Esophagus muscularis mucosa (tissue), 4 donors: ENCODE measurements at regions of chrX and their contacts with region 1.

Region 1: DNA sequence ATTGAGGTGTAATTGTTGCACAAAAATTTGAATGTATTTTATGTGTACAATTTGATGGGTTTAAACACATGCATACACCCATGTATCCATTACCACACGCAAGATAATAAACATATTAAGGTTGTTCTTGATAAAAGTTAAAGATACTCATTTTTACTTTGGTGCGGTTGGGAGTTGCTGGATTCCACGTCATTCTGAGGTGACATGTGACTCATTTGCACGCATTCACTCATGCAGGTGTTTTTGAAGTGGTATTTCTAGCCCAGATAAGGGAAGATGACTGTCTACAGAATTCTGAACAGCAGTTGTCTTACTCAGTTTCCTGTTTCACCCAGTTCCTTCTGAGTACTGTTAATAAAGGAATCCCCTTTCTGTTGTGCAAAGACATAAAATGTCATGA is 142.0 kb downstream of the RTL3 start:
- DNase-seq: no peak
- H3K4me3 ChIP-seq: no peak overlapping the region
- H3K27ac ChIP-seq: no peak overlapping the region
- H3K4me1 ChIP-seq: peaks cover 0 to 29% (median 17%) of the 10 kb centered on the region in 4 donors
- H3K27me3 ChIP-seq: no peaks in the 10 kb centered on the region
- CTCF ChIP-seq: no peak
- EP300 ChIP-seq: no peak
- POLR2A ChIP-seq: no peak

Region 2: GRCh38 chrX:78139160-78140123 is 377.7 kb before region 1 on chrX and contains the start of gene TAF9B:
- intact Hi-C with region 1: loop called (anchors 10 kb)
- DNase-seq: peak; percentile 93
- H3K4me3 ChIP-seq: peak within 1 kb of the TSS; percentile 69 to 82 (median 73)
- H3K27ac ChIP-seq: peak within 1 kb of the TSS; percentile 86 to 91 (median 90)
- H3K4me1 ChIP-seq: peaks cover 0 to 10% (median 7%) of the 10 kb centered on the region in 4 donors
- H3K27me3 ChIP-seq: no peaks in the 10 kb centered on the region
- CTCF ChIP-seq: no peak
- EP300 ChIP-seq: no peak
- POLR2A ChIP-seq: no peak
- total RNA-seq, gene TAF9B: 35.8 to 71.2 (median 58.2) TPM

Region 3: DNA sequence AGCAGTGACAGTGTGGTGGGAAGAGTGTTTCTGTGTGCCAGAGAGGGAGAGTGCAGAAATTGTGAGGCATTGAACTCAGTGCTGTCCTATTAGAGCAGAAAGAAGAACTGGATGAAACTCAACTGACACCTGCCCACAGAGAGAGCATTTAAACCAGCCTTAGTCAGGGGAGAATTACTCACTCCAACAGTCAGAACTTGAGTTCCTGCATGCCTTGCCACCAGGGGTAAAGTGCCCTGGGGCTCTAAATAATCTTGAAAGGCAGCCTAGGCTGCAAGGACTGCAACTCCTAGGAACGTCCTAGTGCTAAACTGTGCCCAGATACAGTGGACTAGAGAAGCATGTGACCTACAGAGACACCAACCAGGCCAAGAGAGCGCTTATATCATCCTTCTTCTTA is 202.6 kb before region 1 on chrX:
- intact Hi-C with region 1: loop called (anchors 10 kb)
- DNase-seq: no peak
- H3K4me3 ChIP-seq: no peak overlapping the region
- H3K27ac ChIP-seq: no peak overlapping the region
- H3K4me1 ChIP-seq: peaks cover 0 to 34% (median 11%) of the 10 kb centered on the region in 4 donors
- H3K27me3 ChIP-seq: no peaks in the 10 kb centered on the region
- CTCF ChIP-seq: no peak
- EP300 ChIP-seq: no peak
- POLR2A ChIP-seq: no peak

Region 4: GRCh38 chrX:78442426-78442825 is 74.7 kb before region 1 on chrX:
- intact Hi-C with region 1: no loop called
- DNase-seq: no peak
- H3K4me3 ChIP-seq: no peak overlapping the region
- H3K27ac ChIP-seq: no peak overlapping the region
- H3K4me1 ChIP-seq: peaks cover 0 to 5% (median 0%) of the 10 kb centered on the region in 4 donors
- H3K27me3 ChIP-seq: no peaks in the 10 kb centered on the region
- CTCF ChIP-seq: no peak
- EP300 ChIP-seq: no peak
- POLR2A ChIP-seq: no peak

Region 5: GRCh38 chrX:78643096-78643495 is 126.0 kb after region 1 on chrX:
- intact Hi-C with region 1: no loop called
- DNase-seq: no peak
- H3K4me3 ChIP-seq: no peak overlapping the region
- H3K27ac ChIP-seq: no peak overlapping the region
- H3K4me1 ChIP-seq: no peaks in the 10 kb centered on the region
- H3K27me3 ChIP-seq: no peaks in the 10 kb centered on the region
- CTCF ChIP-seq: no peak
- EP300 ChIP-seq: no peak
- POLR2A ChIP-seq: no peak